ENCODE measurements at regions of chr17 and their contacts with region 1.

Region 1: DNA sequence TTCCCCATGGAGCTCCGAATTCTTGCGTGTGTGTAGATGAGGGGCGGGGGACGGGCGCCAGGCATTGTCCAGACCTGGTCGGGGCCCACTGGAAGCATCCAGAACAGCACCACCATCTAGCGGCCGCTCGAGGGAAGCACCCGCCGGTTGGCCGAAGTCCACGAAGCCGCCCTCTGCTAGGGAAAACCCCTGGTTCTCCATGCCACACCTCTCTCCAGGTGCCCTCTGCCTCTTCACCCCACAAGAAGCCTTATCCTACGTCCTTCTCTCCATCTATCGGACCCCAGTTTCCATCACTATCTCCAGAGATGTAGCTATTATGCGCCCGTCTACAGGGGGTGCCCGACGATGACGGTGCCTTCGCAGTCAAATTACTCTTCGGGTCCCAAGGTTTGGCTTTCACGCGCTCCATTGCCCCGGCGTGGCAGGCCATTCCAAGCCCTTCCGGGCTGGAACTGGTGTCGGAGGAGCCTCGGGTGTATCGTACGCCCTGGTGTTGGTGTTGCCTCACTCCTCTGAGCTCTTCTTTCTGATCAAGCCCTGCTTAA is 617 bp upstream of the SENP3 start:
- DNase-seq: peak; percentile 93
- ATAC-seq: peak; percentile 65
- H3K4me3 Mint-ChIP-seq: peak overlapping the region; percentile 94
- H3K27ac Mint-ChIP-seq: peak overlapping the region; percentile 97
- H3K4me1 Mint-ChIP-seq: peaks cover 53% of the 10 kb centered on the region
- H3K27me3 Mint-ChIP-seq: no peaks in the 10 kb centered on the region
- CTCF ChIP-seq: peak; percentile 46; the same call in 1 of the 2 replicates

Region 2: DNA sequence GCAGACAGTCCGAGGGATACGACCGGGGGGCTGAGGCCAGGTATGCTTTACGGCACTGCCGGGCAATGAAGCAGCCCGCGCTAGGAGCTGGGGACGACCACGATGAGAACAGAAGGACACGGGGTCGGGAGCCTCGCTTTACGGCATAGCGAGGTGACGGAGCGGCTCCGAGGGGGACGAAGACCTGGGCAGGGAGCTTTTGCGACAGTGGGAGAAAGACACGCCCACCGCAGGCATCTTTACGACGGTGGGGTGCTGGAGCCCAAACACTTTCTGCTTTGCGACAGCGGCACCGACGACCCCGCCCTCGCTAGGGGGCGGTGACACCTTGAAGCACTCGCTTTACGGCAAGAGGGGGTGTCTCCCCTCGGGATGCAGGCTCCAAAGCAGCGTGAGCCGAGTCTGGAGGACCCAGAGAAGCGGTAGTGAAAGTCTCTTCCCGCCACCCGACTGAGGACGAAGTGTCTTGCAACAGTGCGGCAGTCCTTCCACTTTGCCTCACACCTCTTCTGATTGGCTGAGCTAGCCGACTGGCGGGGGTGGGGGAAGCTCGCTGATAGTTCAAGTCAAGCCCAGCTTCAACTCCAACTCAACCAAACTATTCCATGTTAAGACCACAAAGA is 231.6 kb before region 1 on chr17:
- CTCF ChIA-PET with region 1: interaction called, 14 read pairs
- POLR2A ChIA-PET with region 1: no interaction called
- DNase-seq: peak; percentile 98
- ATAC-seq: peak; percentile 73
- H3K4me3 Mint-ChIP-seq: peak overlapping the region; percentile 93
- H3K27ac Mint-ChIP-seq: peak overlapping the region; percentile 100
- H3K4me1 Mint-ChIP-seq: peaks cover 24% of the 10 kb centered on the region
- H3K27me3 Mint-ChIP-seq: no peaks in the 10 kb centered on the region
- CTCF ChIP-seq: no peak

Region 3: DNA sequence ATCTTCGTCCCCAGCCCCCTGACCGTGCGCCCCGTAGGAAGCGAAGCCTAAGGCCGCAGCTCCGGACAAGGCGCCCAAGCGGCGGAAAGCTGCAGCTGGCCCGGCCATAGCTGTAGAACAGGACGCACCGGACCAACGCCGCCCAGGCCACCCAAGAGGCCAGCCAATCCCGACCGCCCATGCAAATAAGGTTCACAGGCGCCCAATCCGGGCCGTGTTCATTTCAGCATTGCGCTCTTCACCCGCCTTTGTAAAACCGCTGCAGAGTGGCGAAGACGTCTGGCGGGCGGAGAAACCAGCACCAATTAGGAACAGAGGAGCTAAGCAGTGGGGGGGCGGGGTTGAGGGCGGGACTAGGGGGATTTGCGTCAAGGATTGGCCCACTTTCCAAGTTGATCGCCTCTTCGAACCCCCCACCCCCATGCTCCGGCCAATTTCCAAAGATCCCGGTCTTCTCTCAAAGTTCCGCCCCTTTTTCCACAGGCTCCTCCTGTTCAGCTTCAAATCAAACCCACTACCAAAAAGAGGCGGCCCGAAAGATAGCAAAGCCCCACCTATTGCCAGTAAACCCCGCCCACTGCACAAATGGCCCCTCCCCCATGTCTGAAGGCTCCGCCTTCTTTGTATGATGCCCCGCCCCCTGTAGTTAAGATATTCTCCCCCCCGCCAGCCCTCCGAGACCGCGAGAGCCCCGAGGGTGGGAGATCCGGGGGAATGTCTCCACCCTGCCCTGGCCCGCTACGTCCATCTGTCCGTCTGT is 156.9 kb before region 1 on chr17 and contains the start of gene TMEM256:
- CTCF ChIA-PET with region 1: interaction called, 24 read pairs
- POLR2A ChIA-PET with region 1: no interaction called
- DNase-seq: peak; percentile 99
- ATAC-seq: peak; percentile 87
- H3K4me3 Mint-ChIP-seq: peak within 1 kb of the TSS; percentile 84
- H3K27ac Mint-ChIP-seq: peak within 1 kb of the TSS; percentile 85
- H3K4me1 Mint-ChIP-seq: peaks cover 29% of the 10 kb centered on the region
- H3K27me3 Mint-ChIP-seq: no peaks in the 10 kb centered on the region; the same call in 1 of the 2 replicates
- CTCF ChIP-seq: no peak
- total RNA-seq, gene TMEM256: 132 to 180 TPM (median 178 TPM) in 3 replicates

Region 4: DNA sequence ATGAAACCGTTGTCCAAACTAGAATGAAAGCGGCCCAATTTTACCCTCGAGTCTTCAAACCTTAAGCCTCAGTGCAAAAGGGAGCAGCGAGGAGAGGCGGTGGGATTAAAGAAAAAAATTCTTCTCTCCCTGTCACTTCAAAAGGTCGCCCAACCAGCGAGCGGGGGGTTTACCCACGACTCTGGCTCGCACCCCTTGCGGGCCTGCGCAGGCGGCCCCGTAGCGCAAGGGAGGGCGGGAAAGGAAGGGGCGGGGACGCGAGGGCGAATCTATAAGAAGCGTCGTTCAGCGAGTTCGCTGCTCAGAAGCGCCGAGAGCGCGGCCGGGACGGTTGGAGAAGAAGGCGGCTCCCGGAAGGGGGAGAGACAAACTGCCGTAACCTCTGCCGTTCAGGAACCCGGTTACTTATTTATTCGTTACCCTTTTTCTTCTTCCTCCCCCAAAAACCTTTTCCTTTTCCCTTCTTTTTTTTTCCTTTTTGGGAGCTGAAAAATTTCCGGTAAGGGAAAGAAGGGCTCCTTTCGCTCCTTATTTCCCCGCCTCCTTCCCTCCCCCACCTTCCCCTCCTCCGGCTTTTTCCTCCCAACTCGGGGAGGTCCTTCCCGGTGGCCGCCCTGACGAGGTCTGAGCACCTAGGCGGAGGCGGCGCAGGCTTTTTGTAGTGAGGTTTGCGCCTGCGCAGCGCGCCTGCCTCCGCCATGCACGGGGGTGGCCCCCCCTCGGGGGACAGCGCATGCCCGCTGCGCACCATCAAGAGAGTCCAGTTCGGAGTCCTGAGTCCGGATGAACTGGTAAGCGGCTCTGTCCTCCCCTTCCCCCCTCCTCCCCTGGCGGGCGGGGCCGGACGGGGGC is 76.8 kb before region 1 on chr17 and contains the start of gene POLR2A:
- CTCF ChIA-PET with region 1: interaction called, 17 read pairs
- POLR2A ChIA-PET with region 1: no interaction called
- DNase-seq: peak; percentile 96
- ATAC-seq: peak; percentile 65
- H3K4me3 Mint-ChIP-seq: peak within 1 kb of the TSS; percentile 90
- H3K27ac Mint-ChIP-seq: peak within 1 kb of the TSS; percentile 99
- H3K4me1 Mint-ChIP-seq: peaks cover 60% of the 10 kb centered on the region
- H3K27me3 Mint-ChIP-seq: no peaks in the 10 kb centered on the region
- CTCF ChIP-seq: no peak
- total RNA-seq, gene POLR2A: 166 to 170 TPM (median 170 TPM) in 3 replicates

Region 5: GRCh38 chr17:7548585-7549400 is 12.3 kb before region 1 on chr17 and contains the start of gene TNFSF12:
- CTCF ChIA-PET with region 1: interaction called, 19 read pairs
- POLR2A ChIA-PET with region 1: interaction called, 3 read pairs
- DNase-seq: peak; percentile 67
- ATAC-seq: peak; percentile 74
- H3K4me3 Mint-ChIP-seq: peak within 1 kb of the TSS; percentile 77
- H3K27ac Mint-ChIP-seq: peak within 1 kb of the TSS; percentile 37; the same call in 1 of the 2 replicates
- H3K4me1 Mint-ChIP-seq: peaks cover 6% of the 10 kb centered on the region
- H3K27me3 Mint-ChIP-seq: peaks cover 12% of the 10 kb centered on the region
- CTCF ChIP-seq: no peak
- total RNA-seq, gene TNFSF12: 8.1 to 10.5 TPM (median 10.2 TPM) in 3 replicates

Region 6: DNA sequence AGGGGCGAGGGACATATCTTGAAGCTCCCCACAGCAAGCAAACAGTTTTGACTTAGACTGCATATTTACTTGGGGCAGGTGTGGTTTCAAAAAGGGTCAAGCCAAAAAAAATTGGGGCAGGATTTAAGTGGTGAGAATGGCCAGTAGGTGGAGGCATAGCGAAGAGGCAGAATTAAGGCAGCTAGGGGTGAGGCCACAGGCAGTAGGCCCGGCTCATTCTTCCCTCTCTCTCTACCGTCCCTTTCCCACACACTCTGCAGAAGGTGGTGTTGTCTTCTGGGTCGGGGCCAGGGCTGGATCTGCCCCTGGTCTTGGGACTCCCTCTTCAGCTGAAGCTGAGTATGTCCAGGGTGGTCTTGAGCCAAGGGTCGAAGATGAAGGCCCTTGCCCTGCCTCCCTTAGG is 71.4 kb after region 1 on chr17:
- CTCF ChIA-PET with region 1: interaction called, 11 read pairs
- POLR2A ChIA-PET with region 1: no interaction called
- DNase-seq: peak; percentile 56
- ATAC-seq: peak; percentile 55
- H3K4me3 Mint-ChIP-seq: no peak overlapping the region
- H3K27ac Mint-ChIP-seq: no peak overlapping the region
- H3K4me1 Mint-ChIP-seq: peaks cover 35% of the 10 kb centered on the region
- H3K27me3 Mint-ChIP-seq: no peaks in the 10 kb centered on the region
- CTCF ChIP-seq: peak; percentile 28; the same call in 1 of the 2 replicates

Measured in WTC11 (cell line).